Heart left ventricle (tissue), 16 donors: ENCODE measurements at regions of chr1 and their contacts with region 1.

Region 1: DNA sequence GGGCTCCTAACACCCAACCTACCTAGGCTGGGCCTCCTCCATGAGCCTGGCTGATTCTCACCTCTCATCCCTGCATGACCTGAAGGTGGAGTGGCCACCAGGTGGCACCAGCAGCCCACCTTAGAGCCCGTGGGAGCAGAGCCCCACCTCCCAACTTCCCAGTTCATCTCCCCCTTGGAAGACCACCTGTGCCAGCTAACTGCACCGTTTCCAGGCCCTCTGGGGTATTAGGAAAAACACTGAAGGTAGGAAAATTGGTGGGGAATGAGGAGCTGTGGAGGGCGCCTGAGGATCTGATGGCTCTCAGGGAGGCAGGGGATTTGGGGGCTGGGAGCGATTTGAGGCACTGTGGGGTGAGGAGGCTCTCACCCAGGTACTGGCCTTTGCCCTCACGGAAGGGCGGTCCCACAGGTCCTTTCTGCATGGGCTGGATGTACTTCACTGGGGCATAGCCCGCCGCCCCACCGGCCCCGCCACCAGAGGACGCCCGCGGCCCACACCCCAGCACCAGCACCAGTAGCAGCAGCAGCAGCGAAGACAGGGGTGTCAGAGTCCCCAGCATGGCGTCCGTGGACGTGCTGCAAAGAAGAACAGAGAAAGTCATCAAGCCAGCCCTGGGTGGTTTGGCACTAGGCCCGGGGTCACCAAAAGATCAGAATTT is 11.1 kb downstream of the ADPRS start:
- DNase-seq: peak; percentile 69 to 89 (median 77)
- ATAC-seq: peak; percentile 80 to 88 (median 84)
- H3K4me3 ChIP-seq: peak overlapping the region in 1 of 12 donors; percentile 7
- H3K27ac ChIP-seq: no peak overlapping the region
- H3K4me1 ChIP-seq: peaks cover 0 to 26% (median 6%) of the 10 kb centered on the region in 12 donors
- H3K27me3 ChIP-seq: no peaks in the 10 kb centered on the region
- CTCF ChIP-seq: peak; percentile 66 to 93 (median 81)
- POLR2A ChIP-seq: no peak

Region 2: DNA sequence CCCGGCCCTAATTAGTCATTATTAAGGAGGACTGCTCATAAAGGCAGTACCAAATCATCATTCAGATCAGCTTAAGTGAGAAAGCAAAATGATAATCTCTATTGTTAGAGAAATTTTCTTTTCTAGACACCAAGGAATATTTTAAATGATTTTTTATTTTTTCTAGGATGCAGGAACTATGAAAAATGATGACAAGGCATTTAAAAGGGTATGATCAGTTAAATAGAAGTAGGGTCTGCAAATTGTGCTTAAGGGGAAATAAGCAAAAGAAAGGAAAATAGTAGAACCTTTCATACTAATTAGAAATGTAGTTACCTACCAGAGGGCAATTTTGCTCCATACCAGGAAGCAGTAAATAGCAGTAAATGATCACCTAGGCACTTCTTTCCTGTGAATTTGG is 37.5 kb before region 1 on chr1:
- intact Hi-C with region 1: no loop called
- DNase-seq: no peak
- ATAC-seq: no peak
- H3K4me3 ChIP-seq: no peak overlapping the region
- H3K27ac ChIP-seq: no peak overlapping the region
- H3K4me1 ChIP-seq: no peaks in the 10 kb centered on the region
- H3K27me3 ChIP-seq: no peaks in the 10 kb centered on the region
- CTCF ChIP-seq: no peak
- POLR2A ChIP-seq: no peak

Region 3: DNA sequence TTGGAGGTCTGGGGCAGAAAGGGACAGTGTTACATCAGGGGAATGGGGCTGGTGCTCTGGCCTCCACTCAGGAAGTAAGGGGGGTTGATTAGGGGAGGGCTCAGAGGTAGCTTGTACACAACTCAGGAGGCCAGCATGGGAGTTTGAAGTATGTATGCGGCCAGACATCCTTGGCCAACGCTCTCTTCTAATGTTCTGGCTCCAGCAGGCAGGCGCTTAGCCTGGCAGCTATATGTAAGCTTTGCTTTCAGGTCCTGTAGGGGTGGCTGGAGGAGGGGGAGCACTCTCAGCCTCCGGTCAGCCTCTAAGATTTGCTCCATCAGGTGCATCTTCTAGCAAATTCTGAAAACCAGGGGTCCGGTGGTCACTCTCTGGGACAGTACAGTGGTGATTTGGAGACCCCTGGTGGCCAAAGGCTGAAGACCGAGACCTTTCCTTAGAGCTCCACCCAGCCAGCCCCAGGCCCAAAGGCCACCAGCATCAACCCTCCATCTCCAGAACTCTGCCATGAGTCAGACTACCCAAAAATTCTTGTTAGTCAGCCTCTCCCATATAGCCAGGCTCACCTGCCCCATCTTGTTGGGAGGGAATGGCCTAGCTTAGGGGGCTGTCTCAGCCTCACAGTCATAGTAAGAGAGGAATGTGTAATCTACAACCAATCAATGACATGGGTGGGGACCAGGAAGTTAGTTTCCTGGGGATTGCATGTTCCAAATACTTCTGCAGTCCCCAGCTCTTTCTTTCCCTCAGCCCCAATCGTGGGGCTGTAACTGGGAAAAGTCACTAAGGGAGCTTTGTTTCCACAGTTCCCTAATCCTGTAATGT is 34.9 kb after region 1 on chr1:
- intact Hi-C with region 1: loop called (anchors 1 to 5 kb)
- DNase-seq: peak in 2 of 5 donors; percentile 36 to 56
- ATAC-seq: peak; percentile 9 to 51 (median 49)
- H3K4me3 ChIP-seq: no peak overlapping the region
- H3K27ac ChIP-seq: peak overlapping the region in 6 of 12 donors; percentile 46 to 80 (median 68)
- H3K4me1 ChIP-seq: peaks cover 0 to 42% (median 33%) of the 10 kb centered on the region in 12 donors
- H3K27me3 ChIP-seq: no peaks in the 10 kb centered on the region
- CTCF ChIP-seq: peak; percentile 40 to 76 (median 64)
- POLR2A ChIP-seq: no peak

Region 4: GRCh38 chr1:36187800-36188593 is 88.2 kb after region 1 on chr1:
- intact Hi-C with region 1: loop called in 9 of 10 experiments (anchors 1 to 10 kb)
- DNase-seq: peak; percentile 86 to 92 (median 88)
- ATAC-seq: peak; percentile 89 to 97 (median 94)
- H3K4me3 ChIP-seq: no peak overlapping the region
- H3K27ac ChIP-seq: peak overlapping the region; percentile 72 to 90 (median 84)
- H3K4me1 ChIP-seq: peaks cover 0 to 15% (median 9%) of the 10 kb centered on the region in 12 donors
- H3K27me3 ChIP-seq: no peaks in the 10 kb centered on the region
- CTCF ChIP-seq: peak; percentile 69 to 94 (median 88)
- POLR2A ChIP-seq: peak in 1 of 2 donors; percentile 36

Region 5: DNA sequence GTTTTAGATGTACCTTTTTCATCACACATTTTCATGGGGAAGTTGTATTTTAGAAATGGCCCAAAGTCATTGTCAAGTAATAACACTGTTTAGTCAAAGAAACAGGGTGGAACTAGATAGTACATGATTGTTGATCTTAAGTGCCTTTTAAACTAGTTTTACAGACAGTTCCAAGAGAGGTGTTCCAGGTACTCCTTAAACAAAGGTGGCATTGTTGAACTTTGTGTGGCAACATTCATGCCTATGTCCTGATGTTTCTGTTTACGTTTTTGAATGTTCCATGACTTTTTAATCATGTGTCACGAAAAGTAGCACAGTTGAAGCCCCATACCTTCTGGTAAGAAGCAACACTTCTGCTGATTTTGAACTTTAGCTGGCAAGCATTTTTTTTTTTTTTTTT is 197.3 kb after region 1 on chr1:
- intact Hi-C with region 1: loop called in 1 of 10 experiments (anchors 10 kb)
- DNase-seq: no peak
- ATAC-seq: no peak
- H3K4me3 ChIP-seq: no peak overlapping the region
- H3K27ac ChIP-seq: no peak overlapping the region
- H3K4me1 ChIP-seq: peaks cover 0 to 14% (median 6%) of the 10 kb centered on the region in 12 donors
- H3K27me3 ChIP-seq: no peaks in the 10 kb centered on the region
- CTCF ChIP-seq: no peak
- POLR2A ChIP-seq: no peak